ENCODE measurements at regions of chr15 and their contacts with region 1.

Region 1: GRCh38 chr15:94324117-94324826 is 92.9 kb downstream of the MCTP2 start:
- DNase-seq: no peak
- H3K4me3 ChIP-seq: no peak overlapping the region
- H3K27ac ChIP-seq: peak overlapping the region in 1 of 4 donors; percentile 43
- H3K4me1 ChIP-seq: peaks cover 5 to 17% (median 5%) of the 10 kb centered on the region in 3 donors
- H3K27me3 ChIP-seq: no peaks in the 10 kb centered on the region
- CTCF ChIP-seq: peak; percentile 79 to 94 (median 89)
- POLR2A ChIP-seq: no peak

Region 2: DNA sequence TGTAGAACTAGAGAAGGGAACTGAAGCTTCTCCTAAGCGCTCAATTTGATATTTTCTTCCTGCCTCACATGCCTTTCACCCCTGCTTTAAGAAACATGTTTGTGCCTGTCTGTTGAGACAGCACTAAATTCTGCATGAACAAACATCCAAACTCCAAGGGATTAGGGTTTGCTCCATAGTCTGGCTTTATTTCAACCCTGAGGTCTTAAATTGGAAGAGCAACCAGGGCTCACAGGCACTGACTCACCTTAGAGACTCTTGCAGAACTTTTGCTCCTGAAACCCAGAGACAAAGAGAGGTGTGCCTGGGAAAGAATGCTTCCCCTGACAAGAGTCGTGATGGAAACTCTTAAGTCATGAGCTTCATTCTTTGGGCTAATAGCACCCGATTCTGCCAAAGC is 486.8 kb before region 1 on chr15:
- intact Hi-C with region 1: no loop called
- DNase-seq: no peak
- H3K4me3 ChIP-seq: no peak overlapping the region
- H3K27ac ChIP-seq: peak overlapping the region; percentile 75 to 84 (median 80)
- H3K4me1 ChIP-seq: peaks cover 0 to 31% (median 4%) of the 10 kb centered on the region in 3 donors
- H3K27me3 ChIP-seq: no peaks in the 10 kb centered on the region
- CTCF ChIP-seq: no peak
- POLR2A ChIP-seq: no peak

Region 3: DNA sequence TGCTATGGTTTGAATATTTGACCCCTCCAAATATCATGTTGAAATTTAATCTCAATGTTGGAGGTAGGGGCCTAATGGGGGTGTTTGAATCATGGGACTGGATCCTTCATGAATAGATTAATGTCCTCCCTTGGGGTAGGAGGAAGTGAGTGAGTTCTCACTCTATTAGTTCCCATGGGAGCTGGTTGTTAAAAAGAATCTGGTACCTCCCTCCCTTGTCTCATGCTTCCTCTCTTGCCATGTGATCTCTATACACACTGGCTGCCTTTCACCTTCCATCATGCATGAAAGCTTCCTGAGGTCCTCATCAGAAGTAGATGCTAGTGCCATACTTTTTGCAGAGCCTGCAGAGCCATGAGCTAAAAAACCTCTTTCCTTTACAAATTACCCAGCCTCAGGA is 270.6 kb before region 1 on chr15:
- intact Hi-C with region 1: no loop called
- DNase-seq: no peak
- H3K4me3 ChIP-seq: no peak overlapping the region
- H3K27ac ChIP-seq: no peak overlapping the region
- H3K4me1 ChIP-seq: peaks cover 0 to 30% (median 17%) of the 10 kb centered on the region in 3 donors
- H3K27me3 ChIP-seq: no peaks in the 10 kb centered on the region
- CTCF ChIP-seq: no peak
- POLR2A ChIP-seq: no peak

Region 4: GRCh38 chr15:94168247-94168646 is 156.0 kb before region 1 on chr15:
- intact Hi-C with region 1: loop called (anchors 5 kb)
- DNase-seq: no peak
- H3K4me3 ChIP-seq: no peak overlapping the region
- H3K27ac ChIP-seq: no peak overlapping the region
- H3K4me1 ChIP-seq: no peaks in the 10 kb centered on the region
- H3K27me3 ChIP-seq: no peaks in the 10 kb centered on the region
- CTCF ChIP-seq: peak in 1 of 6 experiments; percentile 46
- POLR2A ChIP-seq: no peak

Region 5: DNA sequence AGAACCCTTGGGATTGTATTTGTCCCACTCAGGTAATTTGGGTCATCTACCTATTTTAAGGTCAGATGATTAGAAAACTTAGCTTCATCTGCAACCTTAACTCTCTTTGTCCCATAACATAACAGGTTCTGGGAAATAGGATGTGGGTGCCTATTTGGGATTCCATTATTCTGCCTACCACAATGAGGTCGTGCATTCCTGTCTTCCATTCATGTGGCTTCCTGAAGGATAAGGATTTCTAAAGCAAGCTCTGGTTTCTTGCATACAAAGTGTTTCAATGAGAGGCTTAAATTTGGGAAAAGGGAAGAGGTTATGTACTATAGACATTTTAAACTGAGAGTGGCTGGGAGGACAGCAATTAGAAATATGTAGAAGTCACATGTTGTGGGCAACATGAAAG is 97.4 kb after region 1 on chr15:
- intact Hi-C with region 1: no loop called
- DNase-seq: no peak
- H3K4me3 ChIP-seq: no peak overlapping the region
- H3K27ac ChIP-seq: no peak overlapping the region
- H3K4me1 ChIP-seq: no peaks in the 10 kb centered on the region
- H3K27me3 ChIP-seq: no peaks in the 10 kb centered on the region
- CTCF ChIP-seq: no peak
- POLR2A ChIP-seq: no peak

Measured in esophagus squamous epithelium (tissue), 5 donors.